SK-N-SH (cell line): ENCODE measurements at regions of chr1 and their contacts with region 1.

Region 1: DNA sequence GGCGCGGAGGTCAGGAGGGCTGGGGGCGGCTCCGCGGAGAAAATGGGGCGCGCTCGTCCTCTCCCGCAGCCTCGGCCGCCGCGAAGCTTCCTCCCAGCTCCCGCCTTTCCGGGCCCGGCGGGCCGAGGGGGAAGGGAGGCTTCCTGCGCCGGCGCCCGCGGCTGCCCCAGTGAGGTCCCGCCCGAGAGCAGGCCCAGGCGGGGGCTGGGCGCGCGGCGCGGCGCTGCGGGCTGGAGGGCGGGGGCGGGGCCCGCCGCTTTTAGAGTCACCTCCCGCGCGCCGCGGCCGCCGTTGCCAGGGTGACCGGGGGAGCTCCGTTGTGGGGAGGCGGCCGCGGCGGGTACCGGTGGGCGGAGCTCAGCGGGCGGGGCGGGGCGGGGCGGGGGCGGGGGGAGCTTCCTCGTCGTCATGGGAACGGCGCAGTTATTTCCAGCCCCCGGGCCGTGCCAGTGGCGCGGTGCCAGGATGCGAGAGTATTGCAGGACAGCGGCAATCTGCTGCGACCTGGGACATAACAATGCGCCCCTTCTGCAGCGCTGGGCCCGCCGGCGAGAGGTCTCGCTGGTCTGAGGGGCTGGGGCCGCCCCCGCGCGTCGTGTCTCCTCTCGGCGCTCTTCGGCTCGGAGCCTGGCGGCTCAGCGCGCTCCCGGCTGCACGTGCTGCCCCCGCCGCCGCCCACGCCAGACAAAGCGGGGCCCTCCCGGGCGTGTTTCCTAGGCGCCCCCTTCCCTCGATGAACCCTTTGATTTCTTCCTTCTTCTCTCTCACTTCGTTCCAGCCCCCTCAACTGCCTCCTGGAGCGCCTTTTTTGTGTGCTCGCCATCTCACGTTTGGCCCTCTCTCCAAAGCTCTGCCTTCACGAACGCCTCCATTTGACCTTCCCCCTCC is 16.9 kb downstream of the IER5 start:
- DNase-seq: peak; percentile 98
- H3K4me3 ChIP-seq: peak overlapping the region; percentile 80 to 94
- H3K27ac ChIP-seq: peak overlapping the region; percentile 98 to 99
- H3K4me1 ChIP-seq: peaks cover 45 to 52% of the 10 kb centered on the region in 2 experiments; a peak in 3 of 4 replicates
- H3K27me3 ChIP-seq: no peaks in the 10 kb centered on the region
- CTCF ChIP-seq: no peak
- EP300 ChIP-seq: 0 out of 4 replicates have a peak, but pooled peaks of 1 of the 2 experiments have one; percentile 6
- RAD21 ChIP-seq: no peak

Region 2: GRCh38 chr1:180926164-180926981 is 179.0 kb before region 1 on chr1:
- CTCF ChIA-PET with region 1: interaction called, 3 read pairs
- POLR2A ChIA-PET with region 1: interaction called, 11 read pairs
- DNase-seq: peak; percentile 90
- H3K4me3 ChIP-seq: no peak overlapping the region
- H3K27ac ChIP-seq: peak overlapping the region; percentile 30 to 99; a peak in 3 of 4 replicates
- H3K4me1 ChIP-seq: peaks cover 13 to 81% of the 10 kb centered on the region in 2 experiments; a peak in 3 of 4 replicates
- H3K27me3 ChIP-seq: no peaks in the 10 kb centered on the region
- CTCF ChIP-seq: no peak
- EP300 ChIP-seq: peak; percentile 17 to 92; a peak in 3 of 4 replicates
- RAD21 ChIP-seq: no peak; the same call in 1 of the 2 replicates

Region 3: DNA sequence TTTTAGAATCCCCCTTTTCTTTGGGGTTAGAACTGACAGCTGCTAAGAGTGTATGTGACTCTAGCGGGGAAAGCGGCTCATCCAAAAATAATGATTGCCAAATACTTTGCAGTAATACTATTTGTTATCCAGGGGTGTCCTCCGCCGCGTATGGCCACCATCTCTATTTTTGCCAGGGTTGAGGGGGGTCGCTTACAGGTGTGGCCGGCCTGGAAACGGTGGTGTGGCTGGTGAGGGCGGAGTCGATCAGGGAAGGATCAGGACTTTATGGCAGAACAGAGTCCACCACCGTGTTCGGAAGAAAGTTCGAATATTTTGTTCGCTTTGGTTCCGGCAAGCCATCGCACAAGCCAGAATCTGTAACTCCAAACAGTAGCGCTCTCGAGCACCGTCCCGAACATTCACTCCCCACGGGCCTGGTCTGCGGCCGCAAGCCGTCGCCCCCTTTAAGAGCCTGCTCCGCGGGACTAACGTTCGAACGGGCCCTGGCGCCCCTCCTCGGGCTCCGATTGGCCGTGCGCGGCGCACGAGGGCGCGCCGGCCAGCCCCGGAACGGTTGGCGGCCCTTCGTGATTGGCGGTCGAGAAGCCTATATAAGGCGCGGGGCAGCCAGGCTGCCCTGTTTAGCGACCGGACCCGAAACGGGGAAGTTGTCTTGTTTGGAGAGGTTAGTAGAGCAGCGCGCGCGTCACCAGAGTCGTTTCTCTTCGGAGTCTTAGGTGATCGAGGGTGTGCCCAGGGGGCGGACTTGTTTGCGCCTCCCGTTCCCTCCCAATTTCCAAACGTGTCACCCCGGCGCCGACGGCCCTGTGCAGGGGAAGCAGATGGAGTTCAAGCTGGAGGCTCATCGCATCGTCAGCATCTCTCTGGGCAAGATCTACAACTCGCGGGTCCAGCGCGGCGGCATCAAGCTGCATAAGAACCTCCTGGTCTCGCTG is 17.0 kb before region 1 on chr1 and contains the start of gene IER5:
- CTCF ChIA-PET with region 1: interaction called, 23 read pairs
- POLR2A ChIA-PET with region 1: interaction called, 16 read pairs
- DNase-seq: peak; percentile 97
- H3K4me3 ChIP-seq: peak within 1 kb of the TSS; percentile 90 to 96
- H3K27ac ChIP-seq: peak within 1 kb of the TSS; percentile 77 to 81
- H3K4me1 ChIP-seq: peaks cover 10 to 16% of the 10 kb centered on the region in 2 experiments; a peak in 3 of 4 replicates
- H3K27me3 ChIP-seq: no peaks in the 10 kb centered on the region
- CTCF ChIP-seq: no peak
- EP300 ChIP-seq: 0 out of 4 replicates have a peak, but pooled peaks of 1 of the 2 experiments have one; percentile 15
- RAD21 ChIP-seq: no peak
- polyA plus RNA-seq, gene IER5: 46.2 and 52.9 TPM in 2 replicates

Region 4: GRCh38 chr1:181094416-181095212 is 10.8 kb before region 1 on chr1:
- CTCF ChIA-PET with region 1: interaction called, 23 read pairs
- POLR2A ChIA-PET with region 1: interaction called, 18 read pairs
- DNase-seq: no peak
- H3K4me3 ChIP-seq: no peak overlapping the region
- H3K27ac ChIP-seq: peak overlapping the region; percentile 98 to 99
- H3K4me1 ChIP-seq: peaks cover 60 to 62% of the 10 kb centered on the region in 2 experiments
- H3K27me3 ChIP-seq: no peaks in the 10 kb centered on the region
- CTCF ChIP-seq: no peak
- EP300 ChIP-seq: peak in 1 of 2 experiments; percentile 57; a peak in 1 of 4 replicates
- RAD21 ChIP-seq: no peak

Region 5: GRCh38 chr1:181117638-181118449 is 12.5 kb after region 1 on chr1:
- CTCF ChIA-PET with region 1: interaction called, 11 read pairs
- POLR2A ChIA-PET with region 1: interaction called, 16 read pairs
- DNase-seq: peak; percentile 48
- H3K4me3 ChIP-seq: no peak overlapping the region
- H3K27ac ChIP-seq: no peak overlapping the region; a peak in 1 of 4 replicates
- H3K4me1 ChIP-seq: peaks cover 5 to 22% of the 10 kb centered on the region in 2 experiments; a peak in 3 of 4 replicates
- H3K27me3 ChIP-seq: no peaks in the 10 kb centered on the region
- CTCF ChIP-seq: no peak
- EP300 ChIP-seq: no peak
- RAD21 ChIP-seq: no peak

Region 6: GRCh38 chr1:181134543-181135362 is 29.4 kb after region 1 on chr1:
- CTCF ChIA-PET with region 1: interaction called, 145 read pairs
- POLR2A ChIA-PET with region 1: interaction called, 10 read pairs
- DNase-seq: peak; percentile 55
- H3K4me3 ChIP-seq: no peak overlapping the region
- H3K27ac ChIP-seq: peak overlapping the region; percentile 87 to 96
- H3K4me1 ChIP-seq: peaks cover 24 to 25% of the 10 kb centered on the region in 2 experiments
- H3K27me3 ChIP-seq: no peaks in the 10 kb centered on the region
- CTCF ChIP-seq: no peak
- EP300 ChIP-seq: no peak
- RAD21 ChIP-seq: no peak

Region 7: DNA sequence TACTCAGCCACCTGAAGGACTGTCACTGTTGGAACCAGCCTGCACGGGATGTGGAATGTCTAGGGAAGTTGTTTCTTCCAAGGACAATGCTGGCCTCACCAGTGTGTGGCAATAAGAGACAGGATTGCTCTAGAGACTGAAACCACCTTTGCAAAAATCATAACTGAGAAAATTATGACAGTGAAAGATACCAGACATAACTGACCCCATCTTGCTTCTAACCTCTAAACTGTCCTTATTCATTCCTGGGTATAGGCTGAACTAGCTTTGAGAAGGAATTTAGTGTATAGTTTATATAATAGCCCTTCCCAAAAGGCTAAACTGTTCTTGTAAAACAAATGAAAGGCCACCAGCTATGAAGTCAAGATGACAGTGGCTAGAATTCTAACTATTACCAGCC is 66.7 kb after region 1 on chr1:
- CTCF ChIA-PET with region 1: no interaction called
- POLR2A ChIA-PET with region 1: no interaction called
- DNase-seq: no peak
- H3K4me3 ChIP-seq: no peak overlapping the region
- H3K27ac ChIP-seq: no peak overlapping the region
- H3K4me1 ChIP-seq: no peaks in the 10 kb centered on the region
- H3K27me3 ChIP-seq: no peaks in the 10 kb centered on the region; the same call in 1 of the 2 replicates
- CTCF ChIP-seq: no peak
- EP300 ChIP-seq: no peak
- RAD21 ChIP-seq: no peak